ENCODE measurements at regions of chr2 and their contacts with region 1.

Region 1: GRCh38 chr2:170973492-170974303 is 44.6 kb downstream of the GORASP2 start:
- DNase-seq: peak; percentile 93
- ATAC-seq: peak; percentile 82
- H3K4me3 ChIP-seq: peak overlapping the region; percentile 89
- H3K27ac ChIP-seq: 0 out of 2 replicates have a peak overlapping the region, but pooled peaks have one; percentile 32
- H3K4me1 ChIP-seq: peaks cover 12% of the 10 kb centered on the region
- H3K27me3 ChIP-seq: no peaks in the 10 kb centered on the region
- CTCF ChIP-seq: peak; percentile 90

Region 2: DNA sequence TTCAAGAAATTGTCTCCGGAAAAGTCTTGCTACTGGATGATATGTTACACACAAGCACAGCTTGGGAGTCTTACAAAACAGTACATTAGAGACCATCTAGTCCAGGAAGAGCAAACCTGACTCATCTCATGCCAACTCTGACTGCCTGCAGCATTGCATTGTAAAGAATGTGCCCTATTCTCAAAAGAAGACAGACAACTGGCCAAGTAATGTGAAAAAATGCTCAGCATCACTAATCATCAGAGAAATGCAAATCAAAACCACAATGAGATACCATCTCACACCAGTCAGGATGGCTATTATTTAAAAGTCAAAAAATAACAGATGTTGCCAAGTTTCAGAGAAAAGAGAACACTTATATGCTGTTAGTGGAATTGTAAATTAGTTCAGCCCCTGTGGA is 87.3 kb before region 1 on chr2:
- CTCF ChIA-PET with region 1: no interaction called
- POLR2A ChIA-PET with region 1: no interaction called
- intact Hi-C with region 1: no loop called
- DNase-seq: peak; percentile 59
- ATAC-seq: peak; percentile 42
- H3K4me3 ChIP-seq: no peak overlapping the region
- H3K27ac ChIP-seq: no peak overlapping the region
- H3K4me1 ChIP-seq: no peaks in the 10 kb centered on the region
- H3K27me3 ChIP-seq: no peaks in the 10 kb centered on the region
- CTCF ChIP-seq: no peak

Region 3: GRCh38 chr2:171086352-171087290 is 112.9 kb after region 1 on chr2:
- CTCF ChIA-PET with region 1: no interaction called
- POLR2A ChIA-PET with region 1: no interaction called
- intact Hi-C with region 1: loop called (anchors 2 kb)
- DNase-seq: peak; percentile 66
- ATAC-seq: peak; percentile 84
- H3K4me3 ChIP-seq: no peak overlapping the region
- H3K27ac ChIP-seq: no peak overlapping the region
- H3K4me1 ChIP-seq: peaks cover 5% of the 10 kb centered on the region
- H3K27me3 ChIP-seq: no peaks in the 10 kb centered on the region
- CTCF ChIP-seq: peak; percentile 89

Region 4: GRCh38 chr2:171160119-171160955 is 186.6 kb after region 1 on chr2 and contains the start of gene TLK1:
- CTCF ChIA-PET with region 1: interaction called, 3 read pairs
- POLR2A ChIA-PET with region 1: no interaction called
- intact Hi-C with region 1: loop called (anchors 1 kb)
- DNase-seq: peak; percentile 73
- ATAC-seq: peak; percentile 67
- H3K4me3 ChIP-seq: peak within 1 kb of the TSS; percentile 100
- H3K27ac ChIP-seq: peak within 1 kb of the TSS; percentile 84
- H3K4me1 ChIP-seq: peaks cover 10% of the 10 kb centered on the region
- H3K27me3 ChIP-seq: no peaks in the 10 kb centered on the region
- CTCF ChIP-seq: no peak
- total RNA-seq, gene TLK1: 10.1 and 17.6 TPM in 2 replicates

Region 5: DNA sequence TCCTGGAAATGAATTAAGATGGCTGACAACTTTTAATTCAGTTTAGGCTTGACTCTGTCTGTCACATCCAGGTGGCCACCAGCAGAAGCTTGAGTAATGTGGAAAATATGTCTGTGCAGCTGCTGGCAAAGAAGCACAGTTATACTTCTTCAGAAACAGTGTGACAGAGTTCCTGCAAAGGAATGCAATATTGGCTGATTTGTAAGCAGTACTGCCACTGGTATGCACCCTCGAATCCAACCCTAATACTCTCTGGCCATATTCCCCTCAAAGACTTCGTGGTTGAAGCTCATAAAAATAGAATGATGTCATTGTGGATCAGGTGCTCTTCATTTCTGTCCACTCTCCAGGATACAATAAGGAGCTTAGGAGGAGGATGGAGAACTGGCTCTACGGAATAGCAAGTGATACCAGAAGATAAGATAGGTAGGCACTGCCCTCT is 373.9 kb after region 1 on chr2:
- CTCF ChIA-PET with region 1: no interaction called
- POLR2A ChIA-PET with region 1: no interaction called
- intact Hi-C with region 1: loop called (anchors 1 kb)
- DNase-seq: peak; percentile 82
- ATAC-seq: peak; percentile 91
- H3K4me3 ChIP-seq: no peak overlapping the region
- H3K27ac ChIP-seq: peak overlapping the region; percentile 65
- H3K4me1 ChIP-seq: peaks cover 25% of the 10 kb centered on the region
- H3K27me3 ChIP-seq: no peaks in the 10 kb centered on the region
- CTCF ChIP-seq: no peak

Region 6: GRCh38 chr2:171433763-171434670 is 460.3 kb after region 1 on chr2 and contains the starts of genes DCAF17 and METTL8:
- CTCF ChIA-PET with region 1: no interaction called
- POLR2A ChIA-PET with region 1: no interaction called
- intact Hi-C with region 1: loop called (anchors 5 kb)
- DNase-seq: peak; percentile 97
- ATAC-seq: peak; percentile 94
- H3K4me3 ChIP-seq: peak within 1 kb of the TSS; percentile 90
- H3K27ac ChIP-seq: peak within 1 kb of the TSS; percentile 90
- H3K4me1 ChIP-seq: peaks cover 19% of the 10 kb centered on the region
- H3K27me3 ChIP-seq: no peaks in the 10 kb centered on the region
- CTCF ChIP-seq: peak; percentile 36; the same call in 1 of the 2 replicates
- total RNA-seq, gene DCAF17: 7.4 and 11.1 TPM in 2 replicates
- total RNA-seq, gene METTL8: 8.1 and 10.8 TPM in 2 replicates

Region 7: GRCh38 chr2:171447675-171448074 is 474.0 kb after region 1 on chr2:
- CTCF ChIA-PET with region 1: interaction called, 3 read pairs
- POLR2A ChIA-PET with region 1: no interaction called
- intact Hi-C with region 1: loop called (anchors 1 kb)
- DNase-seq: peak; percentile 25
- ATAC-seq: no peak
- H3K4me3 ChIP-seq: no peak overlapping the region
- H3K27ac ChIP-seq: no peak overlapping the region
- H3K4me1 ChIP-seq: no peaks in the 10 kb centered on the region
- H3K27me3 ChIP-seq: no peaks in the 10 kb centered on the region
- CTCF ChIP-seq: peak; percentile 37; the same call in 1 of the 2 replicates